CD4-positive, alpha-beta T cell (primary cell): ENCODE measurements at regions of chr5 and their contacts with region 1.

Region 1: GRCh38 chr5:68215208-68215897 is at the start of gene PIK3R1:
- DNase-seq: peak; percentile 78 to 97 (median 90)
- ATAC-seq: peak; percentile 75
- H3K4me3 ChIP-seq: peak within 1 kb of the TSS; percentile 78
- H3K4me3 Mint-ChIP-seq: peak within 1 kb of the TSS; percentile 97
- H3K27ac ChIP-seq: peak within 1 kb of the TSS; percentile 91 to 93
- H3K27ac Mint-ChIP-seq: peak within 1 kb of the TSS; percentile 96
- H3K4me1 ChIP-seq: peaks cover 10% of the 10 kb centered on the region
- H3K4me1 Mint-ChIP-seq: peaks cover 47% of the 10 kb centered on the region
- H3K27me3 ChIP-seq: no peaks in the 10 kb centered on the region
- H3K27me3 Mint-ChIP-seq: no peaks in the 10 kb centered on the region
- CTCF ChIP-seq: peak; percentile 22
- total RNA-seq, gene PIK3R1: 455 to 459 TPM

Region 2: DNA sequence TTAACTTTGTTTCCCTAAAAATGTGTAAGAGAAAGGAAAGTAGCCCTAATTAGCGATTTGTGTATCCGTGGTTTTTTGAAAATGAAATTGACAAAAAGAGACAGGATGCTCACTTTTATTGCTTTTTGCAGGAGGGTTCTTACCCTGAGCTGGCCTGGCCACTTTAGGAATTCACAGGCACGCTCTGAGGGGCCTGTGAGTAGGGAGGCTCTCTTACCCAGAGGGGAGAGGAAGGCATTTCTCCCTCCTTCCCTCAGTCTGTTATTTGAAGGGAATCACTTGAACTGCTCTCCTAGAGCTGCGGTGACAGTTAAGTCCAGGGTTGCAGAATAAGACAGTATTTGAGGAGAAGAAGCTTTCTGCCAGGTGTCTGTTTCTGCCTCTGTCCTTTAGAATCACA is 16.9 kb after region 1 on chr5:
- CTCF ChIA-PET with region 1: interaction called, 19 read pairs
- POLR2A ChIA-PET with region 1: interaction called, 20 read pairs
- intact Hi-C with region 1: loop called in 1 of 2 experiments (anchors 2 kb)
- DNase-seq: no peak
- ATAC-seq: no peak
- H3K4me3 ChIP-seq: no peak overlapping the region
- H3K4me3 Mint-ChIP-seq: no peak overlapping the region
- H3K27ac ChIP-seq: no peak overlapping the region
- H3K27ac Mint-ChIP-seq: peak overlapping the region; percentile 68
- H3K4me1 ChIP-seq: peaks cover 35% of the 10 kb centered on the region
- H3K4me1 Mint-ChIP-seq: peaks cover 91% of the 10 kb centered on the region
- H3K27me3 ChIP-seq: no peaks in the 10 kb centered on the region
- H3K27me3 Mint-ChIP-seq: no peaks in the 10 kb centered on the region
- CTCF ChIP-seq: no peak

Region 3: DNA sequence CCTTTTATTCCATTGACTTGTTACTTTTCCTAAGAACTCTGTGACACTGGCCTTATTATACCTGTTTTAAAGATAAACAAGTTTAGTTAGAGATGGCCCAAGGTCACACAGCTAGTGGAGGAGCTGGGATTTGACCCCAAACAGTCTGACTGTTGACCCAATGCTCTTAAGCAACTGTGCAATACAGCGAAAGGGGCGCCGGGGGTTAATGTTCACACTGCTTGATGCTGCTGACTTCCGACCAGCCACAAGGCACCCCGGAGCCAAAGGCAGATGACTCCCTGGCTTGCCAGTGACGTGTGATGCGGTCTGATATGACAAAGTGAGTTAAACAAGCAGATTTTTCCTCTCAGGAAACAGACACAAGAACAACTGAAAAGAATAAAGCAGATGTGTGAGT is 24.1 kb after region 1 on chr5:
- CTCF ChIA-PET with region 1: interaction called, 19 read pairs
- POLR2A ChIA-PET with region 1: interaction called, 37 read pairs
- intact Hi-C with region 1: loop called in 1 of 2 experiments (anchors 1 kb)
- DNase-seq: peak; percentile 61 to 92 (median 74)
- ATAC-seq: peak; percentile 96
- H3K4me3 ChIP-seq: peak overlapping the region; percentile 2
- H3K4me3 Mint-ChIP-seq: peak overlapping the region; percentile 82
- H3K27ac ChIP-seq: peak overlapping the region; percentile 4 to 18
- H3K27ac Mint-ChIP-seq: peak overlapping the region; percentile 90
- H3K4me1 ChIP-seq: peaks cover 37% of the 10 kb centered on the region
- H3K4me1 Mint-ChIP-seq: peaks cover 93% of the 10 kb centered on the region
- H3K27me3 ChIP-seq: no peaks in the 10 kb centered on the region
- H3K27me3 Mint-ChIP-seq: no peaks in the 10 kb centered on the region
- CTCF ChIP-seq: no peak

Region 4: DNA sequence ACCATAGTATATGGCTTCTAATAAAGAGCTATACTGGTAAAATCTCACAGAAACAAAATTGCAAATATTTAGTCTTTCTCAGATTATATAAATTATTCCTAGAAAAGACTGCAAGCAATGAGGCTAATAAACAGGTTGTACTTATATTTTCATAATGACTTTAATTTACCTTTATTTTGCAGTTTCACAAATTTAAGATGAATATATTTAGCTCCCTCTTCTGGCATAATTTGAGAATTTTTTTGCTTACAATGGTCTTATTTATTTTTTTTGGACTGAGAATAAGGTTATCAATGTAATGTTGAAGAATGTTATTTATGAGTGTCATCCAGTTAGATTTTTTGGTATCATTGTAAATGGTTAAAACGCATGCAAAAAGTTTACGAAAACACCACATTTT is 56.9 kb after region 1 on chr5:
- CTCF ChIA-PET with region 1: interaction called, 5 read pairs
- POLR2A ChIA-PET with region 1: interaction called, 32 read pairs
- intact Hi-C with region 1: loop called in 1 of 2 experiments (anchors 10 kb)
- DNase-seq: peak in 3 of 14 experiments; percentile 52 to 56 (median 54)
- ATAC-seq: no peak
- H3K4me3 ChIP-seq: no peak overlapping the region
- H3K4me3 Mint-ChIP-seq: no peak overlapping the region
- H3K27ac ChIP-seq: no peak overlapping the region
- H3K27ac Mint-ChIP-seq: peak overlapping the region; percentile 69
- H3K4me1 ChIP-seq: peaks cover 45% of the 10 kb centered on the region
- H3K4me1 Mint-ChIP-seq: peaks cover 96% of the 10 kb centered on the region
- H3K27me3 ChIP-seq: no peaks in the 10 kb centered on the region
- H3K27me3 Mint-ChIP-seq: no peaks in the 10 kb centered on the region
- CTCF ChIP-seq: peak; percentile 72

Region 5: GRCh38 chr5:68279984-68280383 is 64.6 kb after region 1 on chr5:
- CTCF ChIA-PET with region 1: no interaction called
- POLR2A ChIA-PET with region 1: interaction called, 39 read pairs
- intact Hi-C with region 1: loop called (anchors 5 to 10 kb)
- DNase-seq: peak in 11 of 14 experiments; percentile 20 to 93 (median 40)
- ATAC-seq: peak; percentile 89
- H3K4me3 ChIP-seq: peak overlapping the region; percentile 56
- H3K4me3 Mint-ChIP-seq: peak overlapping the region; percentile 93
- H3K27ac ChIP-seq: peak overlapping the region; percentile 68 to 72
- H3K27ac Mint-ChIP-seq: peak overlapping the region; percentile 91
- H3K4me1 ChIP-seq: peaks cover 53% of the 10 kb centered on the region
- H3K4me1 Mint-ChIP-seq: peaks cover 94% of the 10 kb centered on the region
- H3K27me3 ChIP-seq: no peaks in the 10 kb centered on the region
- H3K27me3 Mint-ChIP-seq: no peaks in the 10 kb centered on the region
- CTCF ChIP-seq: no peak